Left lung (tissue), 14 donors: ENCODE measurements at regions of chr1 and their contacts with region 1.

Region 1: GRCh38 chr1:17606826-17607440 is 67.4 kb downstream of the ARHGEF10L start:
- DNase-seq: peak; percentile 42 to 88 (median 68)
- ATAC-seq: peak; percentile 89
- H3K4me3 ChIP-seq: no peak overlapping the region
- H3K27ac ChIP-seq: no peak overlapping the region
- H3K4me1 ChIP-seq: peaks cover 0 to 6% of the 10 kb centered on the region in 2 donors
- H3K27me3 ChIP-seq: peaks cover 0 to 10% of the 10 kb centered on the region in 2 donors
- CTCF ChIP-seq: peak; percentile 91 to 96

Region 2: GRCh38 chr1:16999863-17000262 is 607.1 kb before region 1 on chr1:
- intact Hi-C with region 1: no loop called
- DNase-seq: no peak
- ATAC-seq: no peak
- H3K4me3 ChIP-seq: no peak overlapping the region
- H3K27ac ChIP-seq: no peak overlapping the region
- H3K4me1 ChIP-seq: no peaks in the 10 kb centered on the region
- H3K27me3 ChIP-seq: no peaks in the 10 kb centered on the region
- CTCF ChIP-seq: no peak

Region 3: DNA sequence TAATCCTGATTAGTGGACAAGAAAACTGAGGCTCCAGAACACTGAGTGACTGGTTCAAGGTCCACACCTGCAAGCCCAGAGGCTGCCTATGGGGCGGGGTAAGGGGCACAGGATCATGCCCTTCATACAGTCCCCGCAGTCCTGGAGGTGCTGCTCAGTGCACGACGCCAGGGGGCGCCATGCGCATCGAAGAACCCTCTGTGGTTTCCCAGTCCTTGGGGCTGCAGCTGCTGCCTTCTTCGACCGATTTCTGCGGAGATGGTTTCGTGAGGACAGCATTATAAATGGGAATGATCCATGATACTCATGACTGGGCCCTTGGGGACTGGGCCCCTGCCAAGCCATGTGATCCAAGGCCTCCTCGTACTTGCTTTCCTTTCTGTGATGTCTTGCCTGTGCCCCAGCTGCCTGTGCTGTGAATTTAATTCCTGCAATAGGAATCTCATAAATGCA is 104.6 kb before region 1 on chr1:
- intact Hi-C with region 1: loop called in 1 of 2 experiments (anchors 5 kb)
- DNase-seq: peak; percentile 59 to 94 (median 81)
- ATAC-seq: peak; percentile 100
- H3K4me3 ChIP-seq: no peak overlapping the region
- H3K27ac ChIP-seq: no peak overlapping the region
- H3K4me1 ChIP-seq: no peaks in the 10 kb centered on the region
- H3K27me3 ChIP-seq: peaks cover 0 to 7% of the 10 kb centered on the region in 2 donors
- CTCF ChIP-seq: peak; percentile 82 to 84